Ascending aorta (tissue), 2 donors: ENCODE measurements at regions of chr2 and their contacts with region 1.

Region 1: DNA sequence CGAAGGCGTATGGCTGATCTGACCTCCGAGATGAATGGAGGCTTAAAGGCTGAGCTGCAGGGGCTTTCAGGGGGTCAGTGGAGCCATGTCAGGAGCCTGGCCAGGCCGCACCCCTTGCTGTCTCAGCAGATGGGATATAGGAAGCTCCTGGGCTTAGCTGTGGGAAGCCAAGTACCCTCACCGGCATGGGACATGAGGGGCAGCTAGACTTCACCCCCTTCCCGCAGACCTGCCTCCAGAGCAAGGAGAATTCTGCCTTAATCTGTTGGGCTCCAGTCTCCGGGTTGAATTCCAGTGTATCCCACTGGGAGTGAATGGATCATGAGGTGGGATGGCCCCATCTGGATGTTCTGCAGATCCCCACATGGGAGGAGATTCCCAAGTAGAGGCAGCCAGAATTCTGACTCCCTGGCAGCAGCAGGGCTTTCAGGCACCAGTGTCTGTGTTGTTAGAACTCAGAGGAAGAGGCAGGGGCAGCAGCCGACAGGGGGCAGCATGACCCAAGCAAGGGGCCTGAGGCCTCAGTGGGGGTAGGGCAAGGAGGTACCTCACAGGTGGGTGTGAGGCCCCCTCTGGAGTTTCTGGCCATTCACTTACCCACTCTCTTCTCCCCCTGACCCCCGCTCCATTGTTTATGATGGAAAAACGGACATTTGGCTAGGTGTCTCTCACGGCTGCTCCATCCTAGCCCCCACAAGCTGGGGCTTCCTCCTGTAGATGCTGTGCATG is 19.1 kb downstream of the CAPG start:
- DNase-seq: no peak
- H3K4me3 ChIP-seq: no peak overlapping the region
- H3K27ac ChIP-seq: no peak overlapping the region
- H3K4me1 ChIP-seq: no peaks in the 10 kb centered on the region
- H3K27me3 ChIP-seq: no peaks in the 10 kb centered on the region
- CTCF ChIP-seq: peak; percentile 36 to 55 (median 46)

Region 2: GRCh38 chr2:85551698-85552678 is 160.9 kb after region 1 on chr2:
- intact Hi-C with region 1: loop called (anchors 1 kb)
- DNase-seq: peak; percentile 43 to 90
- H3K4me3 ChIP-seq: no peak overlapping the region
- H3K27ac ChIP-seq: no peak overlapping the region
- H3K4me1 ChIP-seq: no peaks in the 10 kb centered on the region
- H3K27me3 ChIP-seq: no peaks in the 10 kb centered on the region
- CTCF ChIP-seq: peak; percentile 87 to 93 (median 88)